Caco-2 (cell line): ENCODE measurements at regions of chr11 and their contacts with region 1.

Region 1: GRCh38 chr11:78763664-78764063 is 189.0 kb upstream of the NARS2 start:
- DNase-seq: no peak
- H3K4me3 ChIP-seq: no peak overlapping the region
- H3K4me3 Mint-ChIP-seq: no peak overlapping the region
- H3K27ac Mint-ChIP-seq: no peak overlapping the region
- H3K4me1 ChIP-seq: peaks cover 26% of the 10 kb centered on the region
- H3K4me1 Mint-ChIP-seq: peaks cover 16% of the 10 kb centered on the region
- H3K27me3 ChIP-seq: no peaks in the 10 kb centered on the region
- H3K27me3 Mint-ChIP-seq: no peaks in the 10 kb centered on the region
- CTCF ChIP-seq: no peak

Region 2: DNA sequence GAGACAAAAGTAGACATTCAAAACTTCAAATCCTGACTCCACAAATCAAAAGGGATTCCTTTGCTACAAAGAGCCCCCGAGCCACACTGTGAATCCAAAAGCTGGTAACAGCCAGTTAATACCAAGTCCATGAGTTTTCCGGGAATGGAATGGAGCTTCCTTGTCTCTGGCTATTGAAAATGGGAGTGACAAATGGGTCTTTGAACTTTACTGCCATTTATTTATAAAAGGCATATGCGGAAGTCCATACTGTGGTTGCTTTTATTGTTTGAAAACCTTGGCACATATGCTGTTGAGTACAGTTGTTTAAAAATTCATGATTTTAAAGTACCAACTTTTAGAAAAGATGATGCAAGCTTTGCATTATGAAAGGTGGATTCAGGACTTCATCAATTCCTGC is 17.2 kb after region 1 on chr11:
- CTCF ChIA-PET with region 1: interaction called, 4 read pairs
- POLR2A ChIA-PET with region 1: no interaction called
- intact Hi-C with region 1: loop called (anchors 2 kb)
- DNase-seq: no peak
- H3K4me3 ChIP-seq: no peak overlapping the region
- H3K4me3 Mint-ChIP-seq: no peak overlapping the region
- H3K27ac Mint-ChIP-seq: no peak overlapping the region
- H3K4me1 ChIP-seq: peaks cover 18% of the 10 kb centered on the region
- H3K4me1 Mint-ChIP-seq: peaks cover 27% of the 10 kb centered on the region
- H3K27me3 ChIP-seq: no peaks in the 10 kb centered on the region
- H3K27me3 Mint-ChIP-seq: no peaks in the 10 kb centered on the region
- CTCF ChIP-seq: no peak

Region 3: DNA sequence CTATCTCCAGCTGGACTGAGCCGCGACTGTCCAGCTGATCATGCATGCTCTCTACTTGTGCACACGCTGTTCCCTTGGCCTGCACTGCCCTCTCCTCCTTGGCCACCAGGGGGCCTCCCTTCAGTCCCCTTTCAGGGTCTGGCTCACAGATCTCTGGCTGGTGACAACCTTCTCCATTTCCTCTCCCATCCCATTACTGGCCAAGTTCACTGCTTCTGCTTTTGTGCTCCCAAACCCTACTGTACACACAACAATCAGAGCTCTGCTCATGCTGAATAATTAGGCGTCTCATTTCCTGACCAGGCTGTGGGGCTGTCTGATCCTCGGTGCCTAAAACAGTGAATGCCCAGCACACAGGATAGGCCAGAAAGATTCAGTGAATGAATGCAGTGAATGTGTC is 35.0 kb after region 1 on chr11:
- CTCF ChIA-PET with region 1: no interaction called
- POLR2A ChIA-PET with region 1: no interaction called
- intact Hi-C with region 1: loop called (anchors 1 kb)
- DNase-seq: peak; percentile 74 to 83
- H3K4me3 ChIP-seq: no peak overlapping the region
- H3K4me3 Mint-ChIP-seq: no peak overlapping the region
- H3K27ac Mint-ChIP-seq: no peak overlapping the region
- H3K4me1 ChIP-seq: peaks cover 8% of the 10 kb centered on the region; the same call in 1 of the 2 replicates
- H3K4me1 Mint-ChIP-seq: peaks cover 17% of the 10 kb centered on the region
- H3K27me3 ChIP-seq: no peaks in the 10 kb centered on the region
- H3K27me3 Mint-ChIP-seq: no peaks in the 10 kb centered on the region
- CTCF ChIP-seq: peak; percentile 99